ENCODE measurements at regions of chr3 and their contacts with region 1.

Region 1: GRCh38 chr3:106255870-106256248 is 387.0 kb upstream of the CBLB start:
- DNase-seq: peak; percentile 97
- H3K4me3 ChIP-seq: peak overlapping the region; percentile 97
- H3K27ac ChIP-seq: peak overlapping the region; percentile 97
- H3K4me1 ChIP-seq: peaks cover 28% of the 10 kb centered on the region
- CTCF ChIP-seq: no peak

Region 2: DNA sequence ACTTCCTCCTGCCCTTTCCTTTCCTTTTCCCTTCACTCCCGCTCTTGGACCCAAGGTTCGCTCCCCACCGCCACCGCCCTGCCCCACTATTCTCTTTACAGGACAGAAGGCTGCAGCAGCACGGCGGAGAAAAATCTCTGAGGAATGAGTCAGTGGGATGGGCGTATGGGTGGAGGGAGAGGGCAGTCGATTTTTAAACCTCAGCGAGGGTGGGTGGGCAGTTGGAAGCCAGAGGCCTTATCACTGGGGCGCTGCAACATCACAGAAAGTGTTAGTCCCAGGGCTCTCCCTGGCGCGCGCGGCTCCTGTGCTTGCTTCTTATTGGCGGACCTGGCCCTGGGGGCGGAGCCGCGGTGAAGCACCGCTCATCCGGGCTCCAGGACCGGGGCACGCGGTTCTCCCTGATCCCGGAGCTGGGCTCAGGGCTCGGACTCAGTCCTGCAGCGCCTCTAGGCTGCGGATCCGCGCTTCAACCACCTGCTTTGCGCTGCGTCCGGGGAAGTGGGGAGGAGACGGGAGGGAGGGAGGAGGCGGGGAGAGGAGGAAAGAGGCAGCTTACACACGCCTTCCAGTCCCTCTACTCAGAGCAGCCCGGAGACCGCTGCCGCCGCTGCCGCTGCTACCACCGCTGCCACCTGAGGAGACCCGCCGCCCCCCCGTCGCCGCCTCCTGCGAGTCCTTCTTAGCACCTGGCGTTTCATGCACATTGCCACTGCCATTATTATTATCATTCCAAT is 889.4 kb before region 1 on chr3 and contains the start of gene ALCAM:
- CTCF ChIA-PET with region 1: no interaction called
- POLR2A ChIA-PET with region 1: interaction called, 5 read pairs
- intact Hi-C with region 1: loop called (anchors 5 kb)
- DNase-seq: peak; percentile 91
- H3K4me3 ChIP-seq: peak within 1 kb of the TSS; percentile 74
- H3K27ac ChIP-seq: peak within 1 kb of the TSS; percentile 92
- H3K4me1 ChIP-seq: peaks cover 27% of the 10 kb centered on the region
- CTCF ChIP-seq: peak; percentile 46; the same call in 1 of the 2 replicates
- total RNA-seq, gene ALCAM: 40.4 and 51.3 TPM in 2 replicates

Region 3: DNA sequence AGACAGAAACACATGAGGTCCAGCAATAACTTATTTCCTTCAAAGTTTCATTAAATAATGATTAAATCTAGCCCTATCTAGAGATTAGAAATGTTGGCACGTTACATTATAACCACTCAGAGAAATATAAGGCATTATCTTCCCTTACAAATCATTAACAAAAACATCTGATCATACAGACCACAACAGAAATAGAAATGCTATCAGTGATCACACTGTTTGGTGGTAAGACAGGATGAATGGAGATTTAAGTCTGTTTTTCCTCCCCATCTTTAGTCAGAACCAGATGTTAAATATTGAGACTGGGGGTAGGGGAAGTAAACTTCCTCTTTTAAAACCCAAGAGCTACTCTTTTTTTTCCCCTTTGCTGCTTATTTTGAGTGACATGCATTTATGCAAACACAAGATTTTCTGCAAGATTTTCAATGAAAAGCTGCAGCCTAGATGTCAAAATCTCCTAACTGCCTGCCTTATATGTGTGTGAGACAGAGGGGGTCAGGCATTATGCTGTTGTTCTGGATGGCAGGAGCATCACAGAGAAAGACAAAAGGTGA is 457.4 kb before region 1 on chr3:
- CTCF ChIA-PET with region 1: no interaction called
- POLR2A ChIA-PET with region 1: interaction called, 5 read pairs
- intact Hi-C with region 1: loop called (anchors 1 kb)
- DNase-seq: peak; percentile 90
- H3K4me3 ChIP-seq: peak overlapping the region; percentile 37
- H3K27ac ChIP-seq: peak overlapping the region; percentile 81
- H3K4me1 ChIP-seq: peaks cover 68% of the 10 kb centered on the region
- CTCF ChIP-seq: no peak

Region 4: DNA sequence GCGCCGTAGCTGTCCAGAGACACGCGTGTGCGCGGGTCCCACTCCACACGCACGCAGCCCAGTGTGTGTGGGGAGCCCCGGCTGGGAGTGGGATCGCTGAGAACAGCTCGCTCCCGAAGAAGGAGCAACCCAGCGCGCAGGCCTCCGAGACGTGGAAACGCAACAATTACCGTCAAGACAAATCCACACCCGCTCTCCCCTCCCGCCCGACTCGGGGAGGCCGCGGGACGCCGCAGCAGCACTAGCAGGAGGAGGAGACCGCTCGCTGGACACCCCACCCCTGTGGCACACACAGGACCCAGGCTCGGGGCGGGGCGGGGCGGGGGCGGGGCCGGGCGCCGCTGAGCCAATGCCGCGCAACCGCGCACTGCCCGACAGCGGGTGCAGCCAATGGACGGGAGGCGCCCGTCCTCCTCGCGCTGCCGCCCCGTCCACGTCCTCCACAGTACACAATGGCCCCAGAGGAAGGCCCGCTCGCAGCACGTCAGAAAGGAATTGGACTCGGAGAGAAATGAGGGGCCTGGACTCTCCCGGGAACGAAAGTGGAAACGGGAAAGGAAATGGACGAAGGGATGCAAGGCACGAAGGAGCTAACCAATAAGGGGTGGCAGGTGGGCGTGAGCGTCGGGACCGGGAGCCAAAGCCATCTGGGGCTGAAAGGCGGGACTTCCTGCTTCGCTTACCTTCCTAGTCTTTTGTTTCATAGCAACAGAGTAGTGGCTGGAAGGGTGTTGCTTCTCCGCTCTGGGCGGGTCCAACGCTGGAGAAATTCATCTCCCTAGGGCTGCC is 386.9 kb before region 1 on chr3 and contains the start of gene CBLB:
- CTCF ChIA-PET with region 1: no interaction called
- POLR2A ChIA-PET with region 1: interaction called, 5 read pairs
- intact Hi-C with region 1: loop called (anchors 5 kb)
- DNase-seq: peak; percentile 90
- H3K4me3 ChIP-seq: peak within 1 kb of the TSS; percentile 98
- H3K27ac ChIP-seq: peak within 1 kb of the TSS; percentile 62
- H3K4me1 ChIP-seq: peaks cover 41% of the 10 kb centered on the region
- CTCF ChIP-seq: no peak
- total RNA-seq, gene CBLB: 24.5 and 57.7 TPM in 2 replicates

Region 5: GRCh38 chr3:106534206-106534605 is 278.3 kb after region 1 on chr3:
- CTCF ChIA-PET with region 1: no interaction called
- POLR2A ChIA-PET with region 1: no interaction called
- intact Hi-C with region 1: no loop called
- DNase-seq: no peak
- H3K4me3 ChIP-seq: no peak overlapping the region
- H3K27ac ChIP-seq: no peak overlapping the region
- H3K4me1 ChIP-seq: no peaks in the 10 kb centered on the region
- CTCF ChIP-seq: no peak

Region 6: GRCh38 chr3:107522510-107523288 is 1266.8 kb after region 1 on chr3 and contains the start of gene BBX:
- CTCF ChIA-PET with region 1: no interaction called
- POLR2A ChIA-PET with region 1: no interaction called
- intact Hi-C with region 1: loop called (anchors 5 kb)
- DNase-seq: peak; percentile 92
- H3K4me3 ChIP-seq: peak within 1 kb of the TSS; percentile 89
- H3K27ac ChIP-seq: peak within 1 kb of the TSS; percentile 82
- H3K4me1 ChIP-seq: peaks cover 40% of the 10 kb centered on the region
- CTCF ChIP-seq: no peak
- total RNA-seq, gene BBX: 20.2 and 27.0 TPM in 2 replicates